Activated T-helper 1 cell treated with anti-CD3 and anti-CD28 coated beads, Interleukin-12 subunit alpha, Interleukin-12 subunit beta, Interleukin-2, Interleukin-4 antibody, amounts not matched to agents 30 ng/mL and 10 ng/mL and 1 ng/mL, durations not matched to agents 14 hours and 24 hours and 36 hours (primary cell): ENCODE measurements at regions of chr17 and their contacts with region 1.

Region 1: GRCh38 chr17:69235338-69235930 is 6.8 kb upstream of the ABCA10 start:
- DNase-seq: peak; percentile 54
- H3K4me3 Mint-ChIP-seq: no peak overlapping the region
- H3K27ac Mint-ChIP-seq: no peak overlapping the region
- H3K4me1 Mint-ChIP-seq: no peaks in the 10 kb centered on the region
- H3K27me3 Mint-ChIP-seq: no peaks in the 10 kb centered on the region

Region 2: DNA sequence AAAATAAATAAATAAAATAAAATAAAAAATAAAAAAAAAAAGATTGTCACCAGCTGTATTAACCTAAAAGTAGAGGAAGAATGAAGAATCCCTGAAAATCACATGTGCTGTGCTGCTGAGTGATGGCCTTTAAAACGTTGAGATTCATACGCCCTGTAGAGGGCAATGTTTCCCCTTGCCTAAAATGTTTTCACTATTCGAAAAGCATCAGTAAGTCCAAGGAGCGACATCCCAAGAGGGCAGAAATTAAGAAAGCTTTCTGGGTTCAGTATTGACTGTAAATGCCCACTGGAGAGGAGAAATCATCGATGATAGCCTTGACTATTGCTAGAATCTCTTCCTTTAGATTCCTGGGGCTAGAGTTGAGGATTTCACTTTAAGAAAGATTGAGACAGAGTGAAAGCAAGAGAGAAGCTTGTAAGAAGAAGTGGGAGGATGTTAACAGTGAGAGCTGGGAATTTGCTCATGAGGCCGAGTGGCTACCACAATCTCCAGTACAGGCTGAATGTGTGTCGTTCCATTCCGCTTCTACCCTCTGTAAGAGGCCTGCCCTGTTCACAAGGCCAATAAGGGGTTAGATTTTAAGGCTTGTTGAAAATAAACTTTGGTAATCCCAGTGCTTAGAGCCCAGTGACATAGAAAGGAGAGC is 463.4 kb before region 1 on chr17:
- intact Hi-C with region 1: loop called (anchors 1 kb)
- DNase-seq: no peak
- H3K4me3 Mint-ChIP-seq: peak overlapping the region; percentile 56
- H3K27ac Mint-ChIP-seq: no peak overlapping the region
- H3K4me1 Mint-ChIP-seq: peaks cover 12% of the 10 kb centered on the region
- H3K27me3 Mint-ChIP-seq: no peaks in the 10 kb centered on the region

Region 3: DNA sequence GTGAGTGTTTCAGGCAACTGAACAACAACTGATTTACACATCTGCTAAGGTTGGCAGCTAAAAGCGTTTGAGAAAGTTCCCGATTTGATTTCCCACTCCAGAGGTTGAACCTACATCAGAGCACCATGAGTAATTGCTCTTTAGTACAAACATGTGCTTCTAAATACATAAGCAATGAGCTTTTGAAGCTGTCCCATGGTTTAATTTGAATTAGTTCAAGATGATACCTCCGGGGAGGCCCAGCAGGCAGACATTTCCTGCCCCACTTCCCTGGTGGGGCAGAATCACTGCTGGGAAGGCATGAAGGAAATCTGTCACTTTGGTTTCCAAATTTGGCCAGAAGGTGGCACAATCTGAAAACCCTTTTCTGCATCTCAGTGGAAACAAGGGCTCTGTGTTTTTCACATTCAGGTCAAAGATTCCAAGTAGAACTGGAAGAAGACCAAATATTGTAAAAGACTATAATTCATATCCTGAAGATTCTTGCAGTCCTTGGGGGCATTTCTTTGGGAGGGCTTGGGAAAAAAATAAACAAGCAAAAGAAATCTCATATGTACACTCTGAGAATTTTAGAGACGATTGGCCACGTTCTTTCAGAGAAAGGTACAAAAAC is 458.1 kb before region 1 on chr17:
- intact Hi-C with region 1: loop called (anchors 1 kb)
- DNase-seq: no peak
- H3K4me3 Mint-ChIP-seq: no peak overlapping the region
- H3K27ac Mint-ChIP-seq: no peak overlapping the region
- H3K4me1 Mint-ChIP-seq: peaks cover 7% of the 10 kb centered on the region
- H3K27me3 Mint-ChIP-seq: peaks cover 11% of the 10 kb centered on the region